Cardiac septum (tissue), 1 donor: ENCODE measurements at regions of chr4 and their contacts with region 1.

Region 1: DNA sequence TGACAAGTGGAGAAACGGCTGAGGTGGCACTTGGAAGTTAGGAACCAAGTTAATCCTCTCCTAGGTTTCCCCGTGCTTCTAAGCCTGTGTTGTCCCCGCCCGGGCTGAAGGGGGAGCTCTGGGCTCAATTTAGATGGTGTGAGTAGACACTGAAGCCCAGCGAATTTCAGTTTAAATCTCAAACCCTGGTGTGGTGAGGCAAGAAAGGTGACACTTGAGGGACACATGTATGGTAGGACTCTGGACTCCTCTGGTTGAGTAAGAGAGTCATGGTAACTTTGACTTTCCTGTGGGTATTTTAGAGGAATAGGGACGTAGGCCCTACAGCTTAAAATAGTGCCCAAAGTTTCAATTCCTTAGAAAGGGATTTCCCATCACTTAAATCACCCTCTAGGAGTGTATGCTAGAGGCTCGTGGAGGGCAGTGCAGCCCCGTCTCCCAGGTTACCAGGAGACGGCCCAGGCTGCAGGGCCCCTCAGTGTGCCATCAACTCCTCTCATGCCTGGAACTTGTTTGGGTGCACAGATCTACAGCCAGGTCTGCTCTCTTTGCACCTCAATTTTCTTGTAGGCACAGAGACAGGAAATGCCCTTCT is 24.0 kb downstream of the HAND2 start:
- DNase-seq: peak; percentile 82

Region 2: GRCh38 chr4:172819353-172819752 is 686.7 kb before region 1 on chr4:
- intact Hi-C with region 1: no loop called
- DNase-seq: no peak

Region 3: DNA sequence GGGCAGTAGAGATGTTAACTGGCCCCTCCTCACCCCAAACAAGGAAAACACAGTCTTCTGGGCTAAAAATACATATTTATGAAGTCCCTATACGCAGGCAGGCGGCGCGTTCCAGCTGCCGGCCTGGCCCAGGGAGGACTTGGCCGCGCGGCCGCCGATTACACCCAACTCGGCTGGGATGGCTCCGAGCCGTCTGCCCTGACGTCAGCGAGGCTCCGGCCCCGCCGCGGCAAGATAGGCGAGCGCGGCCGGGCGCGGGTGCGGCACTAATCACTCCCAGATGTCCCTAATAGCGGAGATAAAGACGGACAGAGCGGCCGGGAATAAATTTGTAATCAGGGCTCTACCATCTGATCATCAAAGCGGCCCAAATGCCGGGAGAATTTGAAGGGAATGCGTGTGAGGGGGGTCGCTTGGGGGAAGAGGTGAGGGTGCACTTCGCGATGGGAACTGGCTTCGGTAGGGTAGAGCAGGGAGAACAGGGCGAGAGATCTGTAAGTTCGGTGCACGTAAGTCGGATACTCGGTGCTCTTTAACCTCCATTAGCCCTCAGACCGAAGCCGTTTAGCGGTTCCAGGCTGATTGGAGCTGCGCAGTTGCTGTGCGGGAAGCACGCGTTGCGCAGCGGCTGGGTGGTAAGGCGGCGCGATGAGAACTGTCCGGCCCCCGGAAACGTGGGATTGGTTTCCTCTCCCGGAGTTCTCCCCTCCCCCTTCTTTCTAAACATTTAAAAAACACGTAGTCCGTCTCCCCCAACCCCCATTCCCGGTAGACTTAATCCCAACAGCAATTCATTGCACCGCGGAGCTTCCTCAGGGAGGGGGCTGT is 16.3 kb after region 1 on chr4:
- intact Hi-C with region 1: loop called (anchors 2 kb)
- DNase-seq: peak; percentile 90

Region 4: GRCh38 chr4:173573286-173573685 is 67.3 kb after region 1 on chr4:
- intact Hi-C with region 1: no loop called
- DNase-seq: no peak

Region 5: GRCh38 chr4:173748353-173748752 is 242.3 kb after region 1 on chr4:
- intact Hi-C with region 1: loop called (anchors 1 kb)
- DNase-seq: no peak

Region 6: GRCh38 chr4:173990126-173990868 is 484.3 kb after region 1 on chr4:
- intact Hi-C with region 1: loop called (anchors 2 kb)
- DNase-seq: no peak

Region 7: DNA sequence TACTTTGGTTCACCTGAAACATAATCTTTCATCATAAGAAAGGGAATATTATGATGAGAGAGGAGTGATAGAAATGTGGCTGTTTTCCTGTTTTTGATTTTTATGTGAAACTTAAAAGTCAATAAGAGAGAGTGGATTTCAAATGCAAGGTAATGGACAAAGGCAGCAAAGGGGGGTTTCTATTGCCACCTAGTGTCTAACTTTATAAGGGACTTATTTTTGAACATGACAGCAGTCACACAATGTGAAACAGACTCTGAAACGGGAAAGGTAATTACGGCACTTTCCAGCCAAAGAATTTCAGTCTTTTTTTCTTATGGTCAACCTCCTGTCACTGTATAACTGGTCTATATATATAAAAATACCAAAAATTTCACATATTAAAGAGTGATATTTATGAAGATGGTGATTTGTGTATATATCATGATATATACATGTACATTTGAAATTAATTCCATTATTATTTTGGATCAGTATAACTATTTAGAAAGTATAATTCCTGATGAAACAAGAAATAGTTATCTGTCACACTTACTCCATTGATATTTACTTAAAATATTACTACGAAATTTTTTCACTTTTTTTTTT is 650.3 kb after region 1 on chr4:
- intact Hi-C with region 1: loop called (anchors 5 kb)
- DNase-seq: no peak

Region 8: GRCh38 chr4:174318829-174319764 is 813.1 kb after region 1 on chr4:
- intact Hi-C with region 1: loop called (anchors 10 kb)
- DNase-seq: no peak